ENCODE measurements at regions of chr3 and their contacts with region 1.

Region 1: DNA sequence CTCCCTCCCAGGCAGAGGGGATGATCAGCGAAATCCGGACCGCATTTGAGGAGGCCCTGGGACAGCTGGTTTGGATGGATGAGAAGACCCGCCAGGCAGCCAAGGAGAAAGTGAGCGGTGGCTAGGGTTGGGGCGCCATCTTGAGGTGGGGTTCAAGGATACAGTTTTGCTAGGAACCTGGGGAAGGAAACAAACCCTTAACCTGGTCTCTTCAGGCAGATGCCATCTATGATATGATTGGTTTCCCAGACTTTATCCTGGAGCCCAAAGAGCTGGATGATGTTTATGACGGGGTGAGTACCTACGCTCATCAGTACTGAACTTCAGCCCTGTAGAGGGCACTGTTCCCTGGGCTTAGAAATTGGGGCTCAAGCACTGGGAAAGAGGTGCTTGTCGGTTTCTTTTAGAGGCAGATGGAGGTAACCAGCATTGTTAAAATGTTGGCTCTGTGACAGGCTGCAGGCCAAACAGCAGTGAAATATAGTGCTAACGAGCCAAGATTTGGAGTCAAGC is 9.6 kb upstream of the PSMD2 start:
- DNase-seq: peak; percentile 76
- ATAC-seq: peak; percentile 84
- H3K4me3 ChIP-seq: no peak overlapping the region
- H3K27ac ChIP-seq: no peak overlapping the region
- H3K4me1 ChIP-seq: peaks cover 0 to 5% of the 10 kb centered on the region in 2 experiments; a peak in 1 of 4 replicates
- H3K27me3 ChIP-seq: no peaks in the 10 kb centered on the region
- CTCF ChIP-seq: peak; percentile 75 to 97 (median 90)
- POLR2A ChIP-seq: no peak
- RAD21 ChIP-seq: peak; percentile 95

Region 2: DNA sequence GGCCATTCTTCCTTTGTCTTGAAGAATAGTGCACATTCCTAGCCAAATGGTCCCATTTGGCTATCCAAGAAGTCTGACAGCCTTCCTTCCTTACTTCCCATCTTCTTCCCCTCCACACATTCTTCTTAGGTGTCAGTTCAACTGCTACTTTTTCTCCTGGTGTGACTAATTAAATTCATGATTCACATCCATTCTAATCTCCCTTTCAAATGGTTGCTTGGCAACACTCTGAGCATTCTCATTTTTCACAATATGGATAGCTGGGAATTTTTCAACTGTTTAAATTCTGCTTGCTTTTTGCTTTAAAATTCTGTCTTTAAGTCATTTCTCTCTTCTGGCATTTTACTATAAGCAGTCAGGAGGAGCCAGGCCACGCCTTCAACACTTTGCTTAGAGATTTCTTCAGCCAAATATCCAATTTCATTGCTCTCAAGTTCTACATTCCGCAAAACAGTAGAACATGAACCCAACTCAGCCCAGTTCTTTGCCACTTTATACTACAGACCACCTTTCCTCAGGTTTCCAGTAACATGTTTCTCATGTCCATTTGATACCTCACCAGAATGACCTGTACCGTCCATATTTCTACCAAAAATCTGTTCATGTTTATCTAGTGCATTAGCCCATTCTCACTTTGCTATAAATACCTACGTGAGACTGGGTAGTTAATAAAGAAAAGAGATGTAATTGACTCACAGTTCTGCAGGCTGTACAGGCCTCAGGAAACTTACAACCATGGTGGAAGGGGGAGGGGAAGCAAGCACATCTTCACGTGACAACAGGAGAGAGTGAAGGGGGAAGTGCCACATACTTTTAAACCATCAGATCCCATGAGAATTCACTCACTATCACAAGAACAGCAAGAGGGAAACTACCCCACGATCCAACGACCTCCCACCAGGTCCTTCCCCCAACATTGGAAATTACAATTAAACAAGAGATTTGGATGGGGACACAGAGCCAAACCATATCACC is 829.1 kb before region 1 on chr3:
- CTCF ChIA-PET with region 1: no interaction called
- POLR2A ChIA-PET with region 1: no interaction called
- RAD21 ChIA-PET with region 1: no interaction called
- intact Hi-C with region 1: loop called (anchors 10 kb)
- DNase-seq: no peak
- ATAC-seq: no peak
- H3K4me3 ChIP-seq: no peak overlapping the region
- H3K27ac ChIP-seq: no peak overlapping the region
- H3K4me1 ChIP-seq: no peaks in the 10 kb centered on the region; a peak in 2 of 4 replicates
- H3K27me3 ChIP-seq: no peaks in the 10 kb centered on the region
- CTCF ChIP-seq: no peak
- POLR2A ChIP-seq: no peak
- RAD21 ChIP-seq: no peak

Region 3: DNA sequence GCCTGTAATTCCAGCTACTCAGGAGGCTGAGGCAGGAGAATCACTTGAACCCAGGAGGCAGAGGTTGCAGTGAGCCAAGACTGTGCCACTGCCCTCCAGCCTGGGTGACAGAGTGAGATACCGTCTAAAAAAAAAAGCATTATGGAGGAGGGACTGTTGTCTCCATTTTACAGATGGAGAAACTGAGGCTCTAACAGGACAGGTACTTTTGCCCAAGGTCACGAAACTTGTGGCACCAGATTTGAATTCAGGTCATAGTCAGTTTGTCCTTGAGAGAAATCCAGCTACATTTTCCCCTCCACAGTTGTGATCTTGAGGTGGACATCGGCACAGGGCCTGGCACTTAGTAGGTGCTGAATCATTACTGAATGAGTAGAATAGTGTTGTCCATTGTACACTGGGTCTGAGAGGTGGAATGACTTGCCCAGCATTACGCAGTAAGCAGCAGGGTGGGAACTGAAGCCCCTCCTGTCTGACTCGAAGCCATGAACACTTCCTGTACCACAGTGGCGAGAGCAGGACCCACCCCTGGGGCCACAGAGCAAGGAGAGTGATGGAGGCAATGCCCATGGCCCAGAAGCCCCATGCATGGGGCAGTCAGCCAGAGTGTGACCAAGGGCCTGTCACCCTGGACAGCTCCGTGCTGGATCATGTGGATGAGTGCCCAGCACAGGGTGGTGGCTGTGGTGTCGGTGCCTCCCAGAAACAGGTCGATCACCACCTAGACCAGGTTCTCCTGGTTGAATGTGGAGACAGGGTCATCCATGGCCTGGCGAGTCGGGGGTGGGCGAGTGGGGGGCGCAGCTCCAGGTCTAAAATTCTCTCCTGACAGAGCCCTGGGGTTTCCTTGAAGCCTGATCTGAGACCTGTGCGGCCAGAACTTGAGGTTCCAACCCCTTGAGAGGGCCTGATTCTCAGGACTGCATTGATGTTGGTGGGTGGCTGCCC is 384.4 kb before region 1 on chr3:
- CTCF ChIA-PET with region 1: interaction called, 8 read pairs
- POLR2A ChIA-PET with region 1: no interaction called
- RAD21 ChIA-PET with region 1: no interaction called
- intact Hi-C with region 1: loop called (anchors 2 kb)
- DNase-seq: no peak
- ATAC-seq: 0 out of 2 replicates have a peak, but pooled peaks have one; percentile 37
- H3K4me3 ChIP-seq: no peak overlapping the region
- H3K27ac ChIP-seq: no peak overlapping the region
- H3K4me1 ChIP-seq: no peaks in the 10 kb centered on the region
- H3K27me3 ChIP-seq: no peaks in the 10 kb centered on the region
- CTCF ChIP-seq: no peak
- POLR2A ChIP-seq: no peak
- RAD21 ChIP-seq: no peak

Region 4: DNA sequence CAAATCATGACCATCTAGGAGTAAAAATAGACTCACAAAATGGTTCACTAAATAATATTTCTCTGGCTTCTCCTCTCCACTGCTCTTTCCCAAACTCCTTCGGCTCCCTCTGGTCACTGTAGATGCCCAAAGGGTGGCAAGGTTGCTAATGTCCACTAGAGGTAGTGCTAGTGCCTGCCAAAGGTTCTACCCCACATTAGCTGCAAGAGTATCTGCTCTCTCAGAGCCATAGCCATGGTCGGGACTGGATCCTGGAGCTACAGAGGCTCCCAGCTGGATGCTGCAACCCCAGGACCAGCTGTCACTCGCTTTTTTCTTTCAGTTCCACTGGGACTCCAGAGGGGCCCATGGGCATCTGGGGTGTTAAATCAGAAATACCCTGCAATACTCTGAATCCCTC is 249.5 kb before region 1 on chr3:
- CTCF ChIA-PET with region 1: interaction called, 4 read pairs
- POLR2A ChIA-PET with region 1: no interaction called
- RAD21 ChIA-PET with region 1: no interaction called
- intact Hi-C with region 1: loop called (anchors 5 kb)
- DNase-seq: peak; percentile 26
- ATAC-seq: peak; percentile 92
- H3K4me3 ChIP-seq: no peak overlapping the region
- H3K27ac ChIP-seq: no peak overlapping the region
- H3K4me1 ChIP-seq: no peaks in the 10 kb centered on the region
- H3K27me3 ChIP-seq: peaks cover 4% of the 10 kb centered on the region; the same call in 1 of the 2 replicates
- CTCF ChIP-seq: peak; percentile 54 to 70 (median 63); a peak in 5 of 6 replicates
- POLR2A ChIP-seq: no peak
- RAD21 ChIP-seq: peak; percentile 76

Region 5: DNA sequence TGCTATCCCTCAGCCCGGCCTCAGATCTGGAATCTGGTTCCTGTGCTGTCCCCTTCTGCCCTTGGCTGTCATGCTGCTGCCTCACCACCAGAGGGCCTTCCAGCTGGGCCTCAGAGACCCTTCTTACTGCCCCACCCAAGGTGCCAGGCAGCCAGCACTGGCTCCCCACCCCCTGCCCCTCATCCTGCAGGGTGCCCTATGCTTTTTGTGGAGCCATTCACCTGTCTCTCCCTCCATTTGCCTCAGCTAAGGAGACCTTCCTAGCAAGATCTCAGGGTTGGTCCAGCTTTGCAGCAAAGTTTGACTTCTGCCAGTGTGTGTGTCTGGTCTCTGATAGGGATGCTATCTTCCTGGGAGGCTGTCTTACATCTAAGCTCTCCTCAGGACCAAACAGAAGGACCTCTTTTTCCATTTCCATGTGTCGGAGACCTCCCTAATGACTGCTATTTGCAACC is 62.0 kb before region 1 on chr3:
- CTCF ChIA-PET with region 1: interaction called, 9 read pairs
- POLR2A ChIA-PET with region 1: interaction called, 3 read pairs
- RAD21 ChIA-PET with region 1: interaction called in 1 of 2 experiments, 3 read pairs
- intact Hi-C with region 1: loop called (anchors 2 kb)
- DNase-seq: no peak
- ATAC-seq: peak; percentile 56
- H3K4me3 ChIP-seq: no peak overlapping the region
- H3K27ac ChIP-seq: no peak overlapping the region
- H3K4me1 ChIP-seq: peaks cover 0 to 18% of the 10 kb centered on the region in 2 experiments; a peak in 3 of 4 replicates
- H3K27me3 ChIP-seq: no peaks in the 10 kb centered on the region
- CTCF ChIP-seq: peak; percentile 77 to 94 (median 83)
- POLR2A ChIP-seq: no peak
- RAD21 ChIP-seq: peak; percentile 60

Region 6: DNA sequence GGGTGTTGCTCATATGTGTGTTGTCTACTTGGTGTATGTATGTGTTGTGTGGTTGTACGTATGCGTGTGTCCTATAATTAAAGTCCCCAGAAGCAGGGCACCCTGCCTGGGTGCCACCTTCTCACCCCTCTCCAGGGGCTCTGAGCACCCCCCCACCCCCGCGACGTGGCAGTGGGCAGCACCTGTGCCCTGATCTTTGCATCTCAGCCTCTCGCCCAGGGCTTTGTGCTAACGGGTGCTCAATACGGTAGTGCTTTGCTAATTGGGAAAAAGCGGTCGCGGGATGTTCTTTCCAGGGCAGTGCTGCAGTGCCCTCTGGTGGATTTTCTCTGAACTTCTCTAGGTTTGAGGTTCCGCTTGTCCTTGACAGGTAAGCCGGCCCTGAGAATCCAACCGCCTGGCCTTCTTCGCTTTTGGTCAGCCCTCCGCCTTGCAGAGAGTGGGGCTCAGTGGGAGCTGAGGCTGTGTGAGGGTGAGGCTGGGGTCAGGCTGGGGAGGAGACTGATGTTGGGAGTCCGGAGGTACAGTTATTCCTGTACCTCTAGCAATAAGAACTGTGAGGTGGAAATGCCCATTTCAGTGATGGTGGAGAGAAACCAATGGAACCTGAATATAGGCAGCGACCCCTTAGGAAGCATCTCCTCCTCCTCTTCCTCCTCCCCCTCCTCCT is 254.5 kb after region 1 on chr3:
- CTCF ChIA-PET with region 1: no interaction called
- POLR2A ChIA-PET with region 1: no interaction called
- RAD21 ChIA-PET with region 1: no interaction called
- intact Hi-C with region 1: loop called (anchors 1 kb)
- DNase-seq: peak; percentile 86
- ATAC-seq: peak; percentile 80
- H3K4me3 ChIP-seq: peak overlapping the region in 1 of 2 experiments; percentile 17; a peak in 1 of 4 replicates
- H3K27ac ChIP-seq: no peak overlapping the region
- H3K4me1 ChIP-seq: peaks cover 0 to 11% of the 10 kb centered on the region in 2 experiments; a peak in 2 of 4 replicates
- H3K27me3 ChIP-seq: no peaks in the 10 kb centered on the region
- CTCF ChIP-seq: peak; percentile 79 to 95 (median 93)
- POLR2A ChIP-seq: no peak
- RAD21 ChIP-seq: peak; percentile 99

Measured in HCT116 (cell line).